GM12878 (cell line): ENCODE measurements at regions of chr19 and their contacts with region 1.

Region 1: DNA sequence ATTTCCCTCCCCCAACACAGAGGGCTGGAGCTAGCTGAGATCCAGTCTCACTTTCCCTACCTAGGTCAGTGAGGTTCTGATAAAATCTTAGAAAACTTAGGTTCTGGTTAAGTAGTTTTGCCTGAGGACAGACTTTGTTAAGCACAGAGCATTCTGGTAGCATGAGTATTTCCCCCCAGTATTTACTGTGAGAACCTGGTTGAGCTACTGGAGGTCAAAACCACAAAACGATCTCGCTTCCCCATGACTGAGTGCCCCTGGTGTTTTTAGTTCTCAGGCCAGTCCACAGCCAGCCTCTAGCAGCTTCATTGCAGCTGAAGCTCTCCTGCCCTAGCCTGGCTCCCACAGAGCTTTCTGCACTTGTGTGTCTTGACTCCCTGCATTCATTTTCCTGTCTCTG is 1138.2 kb downstream of the UQCRFS1 start:
- DNase-seq: peak; percentile 75
- ATAC-seq: peak; percentile 80
- H3K4me3 ChIP-seq: no peak overlapping the region
- H3K27ac ChIP-seq: peak overlapping the region; percentile 69
- H3K4me1 ChIP-seq: peaks cover 3% of the 10 kb centered on the region
- H3K27me3 ChIP-seq: no peaks in the 10 kb centered on the region
- CTCF ChIP-seq: no peak
- EP300 ChIP-seq: no peak
- POLR2A ChIP-seq: no peak
- RAD21 ChIP-seq: 0 out of 2 replicates have a peak, but pooled peaks have one; percentile 12

Region 2: DNA sequence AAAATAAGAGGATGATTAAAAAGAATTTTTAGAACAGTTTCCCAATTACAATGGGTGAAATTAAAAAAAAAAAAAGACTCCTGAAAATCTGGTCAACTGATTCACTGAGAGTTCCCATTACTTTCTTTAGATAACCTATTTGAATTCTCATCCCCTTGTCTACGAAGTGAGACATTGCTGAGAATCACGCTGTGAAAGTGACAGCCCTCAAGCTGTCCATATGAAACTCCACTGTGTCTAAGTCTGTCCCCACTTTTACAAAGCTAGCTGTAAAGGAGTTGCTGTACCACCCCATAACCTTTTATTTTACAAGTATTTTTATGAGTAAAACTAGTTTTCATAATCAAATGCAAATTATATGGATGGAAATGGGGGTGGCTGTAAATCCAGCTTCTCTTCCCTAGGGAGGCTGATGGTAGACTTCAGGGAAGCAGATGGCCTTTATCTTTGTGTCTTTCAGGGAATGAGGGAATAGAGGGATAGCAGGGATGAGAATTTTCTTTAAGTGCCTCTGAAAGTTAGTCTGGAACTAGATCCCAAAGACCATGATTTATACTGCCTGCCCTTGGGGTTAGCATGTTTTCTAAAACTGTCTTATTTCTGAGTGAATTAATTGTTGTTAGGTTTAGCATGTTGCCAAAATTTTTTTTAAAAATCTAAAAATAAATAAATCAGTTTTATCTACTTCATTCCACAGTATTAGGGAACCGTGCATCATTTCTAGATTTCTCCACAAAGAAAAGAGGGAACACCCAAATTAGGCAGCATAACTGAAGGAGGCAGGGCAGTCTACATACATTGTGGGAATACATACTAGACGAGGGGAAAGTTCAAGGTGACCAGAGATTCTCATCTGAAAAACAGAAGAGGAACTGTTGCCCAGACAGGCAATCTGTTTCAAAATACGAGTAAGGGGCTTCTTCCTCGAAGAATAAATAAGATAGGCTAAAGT is 80.8 kb before region 1 on chr19:
- CTCF ChIA-PET with region 1: interaction called, 6 read pairs
- POLR2A ChIA-PET with region 1: interaction called, 3 read pairs
- RAD21 ChIA-PET with region 1: interaction called, 14 read pairs
- SMC1A ChIA-PET with region 1: interaction called, 17 read pairs
- in situ Hi-C with region 1: no loop called
- intact Hi-C with region 1: no loop called
- DNase-seq: no peak
- ATAC-seq: peak; percentile 57
- H3K4me3 ChIP-seq: no peak overlapping the region
- H3K27ac ChIP-seq: peak overlapping the region; percentile 25
- H3K4me1 ChIP-seq: no peaks in the 10 kb centered on the region; the same call in 1 of the 2 replicates
- H3K27me3 ChIP-seq: no peaks in the 10 kb centered on the region
- CTCF ChIP-seq: no peak
- EP300 ChIP-seq: no peak
- POLR2A ChIP-seq: no peak
- RAD21 ChIP-seq: no peak

Region 3: DNA sequence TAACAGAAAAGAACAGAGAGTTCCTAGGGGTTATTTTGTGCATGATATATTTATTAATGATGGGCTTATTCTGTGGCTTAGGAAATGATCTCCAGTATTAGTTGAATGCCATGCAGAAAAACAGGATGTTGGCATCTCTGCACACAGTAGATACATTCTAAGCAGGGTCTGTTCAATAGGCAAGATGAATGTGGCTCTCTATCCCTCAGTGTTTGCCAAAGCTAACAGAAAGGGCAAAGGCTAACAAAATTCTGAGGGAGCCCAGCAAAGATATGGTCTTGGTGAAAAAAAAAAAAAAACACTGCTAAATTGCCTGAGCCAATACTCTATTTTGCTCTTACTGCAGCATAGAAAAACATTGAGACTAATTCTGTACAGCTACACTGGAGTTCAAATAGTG is 42.4 kb after region 1 on chr19:
- CTCF ChIA-PET with region 1: no interaction called
- POLR2A ChIA-PET with region 1: interaction called, 4 read pairs
- RAD21 ChIA-PET with region 1: interaction called, 14 read pairs
- SMC1A ChIA-PET with region 1: interaction called, 7 read pairs
- in situ Hi-C with region 1: no loop called
- intact Hi-C with region 1: no loop called
- DNase-seq: no peak
- ATAC-seq: no peak
- H3K4me3 ChIP-seq: no peak overlapping the region
- H3K27ac ChIP-seq: no peak overlapping the region
- H3K4me1 ChIP-seq: no peaks in the 10 kb centered on the region
- H3K27me3 ChIP-seq: no peaks in the 10 kb centered on the region
- CTCF ChIP-seq: no peak
- EP300 ChIP-seq: no peak
- POLR2A ChIP-seq: no peak
- RAD21 ChIP-seq: no peak

Region 4: GRCh38 chr19:28122734-28123133 is 48.0 kb after region 1 on chr19:
- CTCF ChIA-PET with region 1: interaction called, 4 read pairs
- POLR2A ChIA-PET with region 1: interaction called, 4 read pairs
- RAD21 ChIA-PET with region 1: interaction called, 41 read pairs
- SMC1A ChIA-PET with region 1: interaction called, 42 read pairs
- in situ Hi-C with region 1: no loop called
- intact Hi-C with region 1: no loop called
- DNase-seq: no peak
- ATAC-seq: no peak
- H3K4me3 ChIP-seq: no peak overlapping the region
- H3K27ac ChIP-seq: no peak overlapping the region
- H3K4me1 ChIP-seq: no peaks in the 10 kb centered on the region
- H3K27me3 ChIP-seq: no peaks in the 10 kb centered on the region
- CTCF ChIP-seq: no peak
- EP300 ChIP-seq: no peak
- POLR2A ChIP-seq: no peak
- RAD21 ChIP-seq: no peak

Region 5: DNA sequence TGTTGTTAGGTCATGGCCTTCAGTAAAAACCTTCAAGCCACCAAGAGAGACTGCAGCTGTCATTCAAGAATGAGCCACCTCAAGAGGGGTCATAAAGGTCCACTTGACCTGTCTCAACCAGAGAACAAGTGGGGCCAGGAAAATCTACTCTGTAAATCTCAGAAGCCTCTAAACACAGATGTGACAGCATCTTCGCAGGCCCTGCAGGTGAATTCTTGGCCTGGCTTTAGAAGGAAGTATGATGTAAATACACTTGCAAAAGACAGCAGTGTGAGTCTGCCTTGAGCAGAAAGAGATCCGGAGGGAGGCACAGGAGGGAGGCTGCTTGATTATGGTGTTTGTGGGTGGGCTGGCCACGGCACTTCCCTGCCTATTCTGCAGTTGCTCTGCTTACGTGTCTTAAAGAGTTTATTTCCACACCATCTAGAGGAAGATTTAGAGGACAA is 55.4 kb after region 1 on chr19:
- CTCF ChIA-PET with region 1: interaction called, 4 read pairs
- POLR2A ChIA-PET with region 1: interaction called, 8 read pairs
- RAD21 ChIA-PET with region 1: interaction called, 41 read pairs
- SMC1A ChIA-PET with region 1: interaction called, 42 read pairs
- in situ Hi-C with region 1: no loop called
- intact Hi-C with region 1: loop called (anchors 1 kb)
- DNase-seq: peak; percentile 15
- ATAC-seq: peak; percentile 75
- H3K4me3 ChIP-seq: no peak overlapping the region
- H3K27ac ChIP-seq: no peak overlapping the region
- H3K4me1 ChIP-seq: no peaks in the 10 kb centered on the region
- H3K27me3 ChIP-seq: no peaks in the 10 kb centered on the region
- CTCF ChIP-seq: no peak
- EP300 ChIP-seq: no peak
- POLR2A ChIP-seq: no peak
- RAD21 ChIP-seq: no peak

Region 6: GRCh38 chr19:28152195-28152594 is 77.5 kb after region 1 on chr19:
- CTCF ChIA-PET with region 1: interaction called, 3 read pairs
- POLR2A ChIA-PET with region 1: interaction called, 3 read pairs
- RAD21 ChIA-PET with region 1: interaction called, 20 read pairs
- SMC1A ChIA-PET with region 1: interaction called, 23 read pairs
- in situ Hi-C with region 1: no loop called
- intact Hi-C with region 1: no loop called
- DNase-seq: no peak
- ATAC-seq: no peak
- H3K4me3 ChIP-seq: no peak overlapping the region
- H3K27ac ChIP-seq: no peak overlapping the region
- H3K4me1 ChIP-seq: no peaks in the 10 kb centered on the region
- H3K27me3 ChIP-seq: no peaks in the 10 kb centered on the region
- CTCF ChIP-seq: no peak
- EP300 ChIP-seq: no peak
- POLR2A ChIP-seq: no peak
- RAD21 ChIP-seq: no peak

Region 7: DNA sequence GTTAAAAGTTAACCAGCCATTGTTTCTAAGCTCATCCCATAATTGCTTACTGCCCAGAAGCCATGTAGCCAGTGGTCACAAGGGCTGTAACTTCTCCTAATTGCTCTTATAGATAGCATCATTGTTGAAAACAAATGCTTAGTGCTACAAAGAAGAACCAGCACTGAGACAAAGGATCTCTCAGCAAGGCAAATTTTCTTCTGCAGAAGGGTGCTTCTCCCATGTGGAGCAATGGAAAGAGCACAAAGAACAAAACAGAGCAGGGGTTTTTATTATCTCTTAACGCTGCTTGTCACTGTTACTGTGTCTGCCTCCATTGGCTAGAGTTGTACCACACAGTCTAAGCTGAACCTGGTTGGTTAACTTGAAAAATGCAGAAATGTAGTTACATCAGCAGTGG is 101.5 kb after region 1 on chr19:
- CTCF ChIA-PET with region 1: no interaction called
- POLR2A ChIA-PET with region 1: no interaction called
- RAD21 ChIA-PET with region 1: no interaction called
- SMC1A ChIA-PET with region 1: no interaction called
- in situ Hi-C with region 1: no loop called
- intact Hi-C with region 1: no loop called
- DNase-seq: no peak
- ATAC-seq: no peak
- H3K4me3 ChIP-seq: no peak overlapping the region
- H3K27ac ChIP-seq: no peak overlapping the region
- H3K4me1 ChIP-seq: no peaks in the 10 kb centered on the region
- H3K27me3 ChIP-seq: no peaks in the 10 kb centered on the region
- CTCF ChIP-seq: no peak
- EP300 ChIP-seq: no peak
- POLR2A ChIP-seq: no peak
- RAD21 ChIP-seq: no peak

Region 8: DNA sequence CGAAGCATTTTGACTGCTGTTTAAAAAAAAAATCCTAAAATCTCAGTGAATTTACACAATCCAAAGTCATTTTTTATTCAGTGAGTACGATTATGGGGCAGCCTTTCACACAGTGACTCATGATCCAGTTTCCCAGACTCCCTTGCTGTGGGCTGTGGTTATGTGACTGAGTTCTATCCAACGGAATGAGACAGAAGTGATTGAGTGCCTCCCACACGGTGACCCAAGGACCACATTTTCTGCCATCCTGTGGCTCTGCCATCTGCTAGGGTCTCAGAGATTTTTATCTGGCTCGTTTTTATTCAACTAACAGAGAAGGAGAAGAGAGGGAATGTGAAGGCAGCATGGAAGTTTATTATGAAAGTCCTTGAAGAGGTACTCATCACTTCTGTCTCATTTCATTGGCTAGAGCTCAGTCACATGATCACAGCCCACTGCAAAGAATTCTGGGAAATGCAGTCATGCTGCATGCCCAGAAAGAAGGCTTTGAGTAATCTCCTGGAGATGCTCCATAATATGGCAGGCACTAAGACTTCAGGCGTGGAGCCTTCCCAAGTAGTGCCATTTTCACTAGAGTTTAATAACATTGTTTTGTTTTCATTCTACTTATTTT is 138.8 kb after region 1 on chr19:
- CTCF ChIA-PET with region 1: interaction called, 4 read pairs
- POLR2A ChIA-PET with region 1: interaction called, 3 read pairs
- RAD21 ChIA-PET with region 1: interaction called, 19 read pairs
- SMC1A ChIA-PET with region 1: interaction called, 19 read pairs
- in situ Hi-C with region 1: no loop called
- intact Hi-C with region 1: no loop called
- DNase-seq: no peak
- ATAC-seq: no peak
- H3K4me3 ChIP-seq: no peak overlapping the region
- H3K27ac ChIP-seq: no peak overlapping the region
- H3K4me1 ChIP-seq: no peaks in the 10 kb centered on the region
- H3K27me3 ChIP-seq: no peaks in the 10 kb centered on the region
- CTCF ChIP-seq: no peak
- EP300 ChIP-seq: no peak
- POLR2A ChIP-seq: no peak
- RAD21 ChIP-seq: no peak

Region 9: GRCh38 chr19:28330831-28331230 is 256.1 kb after region 1 on chr19:
- CTCF ChIA-PET with region 1: no interaction called
- POLR2A ChIA-PET with region 1: no interaction called
- RAD21 ChIA-PET with region 1: no interaction called
- SMC1A ChIA-PET with region 1: no interaction called
- in situ Hi-C with region 1: no loop called
- intact Hi-C with region 1: no loop called
- DNase-seq: no peak
- ATAC-seq: no peak
- H3K4me3 ChIP-seq: no peak overlapping the region
- H3K27ac ChIP-seq: no peak overlapping the region
- H3K4me1 ChIP-seq: no peaks in the 10 kb centered on the region
- H3K27me3 ChIP-seq: no peaks in the 10 kb centered on the region
- CTCF ChIP-seq: no peak
- EP300 ChIP-seq: no peak
- POLR2A ChIP-seq: no peak
- RAD21 ChIP-seq: no peak